Activated B cell treated with CpG ODN at 0.5 μM for 24 hours (primary cell): ENCODE measurements at regions of chr7 and their contacts with region 1.

Region 1: DNA sequence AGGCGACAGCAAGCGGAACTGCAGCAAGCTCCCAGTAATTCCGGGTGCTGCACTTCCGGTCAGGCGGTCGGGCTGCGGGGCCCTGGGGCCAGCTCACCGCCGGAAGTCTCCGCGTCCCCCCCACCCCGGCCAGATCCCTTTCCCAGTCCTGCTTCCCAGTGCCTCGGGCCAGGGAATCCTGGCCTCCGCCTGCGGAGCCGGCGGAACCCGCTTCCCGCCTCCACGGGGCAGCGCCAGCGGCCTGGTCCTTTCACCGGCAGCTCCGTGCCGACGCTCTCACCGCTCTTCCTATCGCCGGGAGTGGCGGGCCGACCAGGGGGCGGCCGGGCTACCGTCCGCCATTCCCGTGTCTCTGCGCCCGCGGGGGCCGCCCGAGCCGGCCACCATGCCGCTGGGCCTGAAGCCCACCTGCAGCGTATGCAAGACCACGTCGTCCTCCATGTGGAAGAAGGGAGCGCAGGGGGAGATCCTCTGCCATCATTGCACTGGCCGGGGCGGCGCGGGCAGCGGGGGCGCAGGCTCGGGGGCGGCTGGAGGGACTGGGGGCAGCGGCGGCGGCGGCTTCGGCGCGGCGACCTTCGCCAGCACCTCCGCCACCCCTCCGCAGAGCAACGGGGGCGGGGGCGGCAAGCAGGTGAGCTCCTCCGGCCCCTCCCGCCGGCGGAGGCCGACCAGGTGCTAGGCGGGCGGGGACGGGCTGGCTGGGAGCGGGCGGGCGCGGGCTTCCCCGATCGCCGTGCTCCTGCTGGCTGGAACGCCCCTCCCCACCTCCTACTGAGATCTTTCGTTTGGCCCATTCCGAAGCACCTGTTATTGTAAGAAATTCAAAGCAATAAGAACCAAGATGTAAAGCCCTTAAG is at the start of gene GATAD1:
- DNase-seq: peak; percentile 74
- ATAC-seq: peak; percentile 85
- H3K4me3 Mint-ChIP-seq: peak within 1 kb of the TSS; percentile 95
- H3K27ac Mint-ChIP-seq: peak within 1 kb of the TSS; percentile 97
- H3K4me1 Mint-ChIP-seq: peaks cover 8% of the 10 kb centered on the region
- H3K27me3 Mint-ChIP-seq: no peaks in the 10 kb centered on the region
- CTCF ChIP-seq: peak; percentile 61
- total RNA-seq, gene GATAD1: 30.6 and 36.2 TPM in 2 replicates

Region 2: DNA sequence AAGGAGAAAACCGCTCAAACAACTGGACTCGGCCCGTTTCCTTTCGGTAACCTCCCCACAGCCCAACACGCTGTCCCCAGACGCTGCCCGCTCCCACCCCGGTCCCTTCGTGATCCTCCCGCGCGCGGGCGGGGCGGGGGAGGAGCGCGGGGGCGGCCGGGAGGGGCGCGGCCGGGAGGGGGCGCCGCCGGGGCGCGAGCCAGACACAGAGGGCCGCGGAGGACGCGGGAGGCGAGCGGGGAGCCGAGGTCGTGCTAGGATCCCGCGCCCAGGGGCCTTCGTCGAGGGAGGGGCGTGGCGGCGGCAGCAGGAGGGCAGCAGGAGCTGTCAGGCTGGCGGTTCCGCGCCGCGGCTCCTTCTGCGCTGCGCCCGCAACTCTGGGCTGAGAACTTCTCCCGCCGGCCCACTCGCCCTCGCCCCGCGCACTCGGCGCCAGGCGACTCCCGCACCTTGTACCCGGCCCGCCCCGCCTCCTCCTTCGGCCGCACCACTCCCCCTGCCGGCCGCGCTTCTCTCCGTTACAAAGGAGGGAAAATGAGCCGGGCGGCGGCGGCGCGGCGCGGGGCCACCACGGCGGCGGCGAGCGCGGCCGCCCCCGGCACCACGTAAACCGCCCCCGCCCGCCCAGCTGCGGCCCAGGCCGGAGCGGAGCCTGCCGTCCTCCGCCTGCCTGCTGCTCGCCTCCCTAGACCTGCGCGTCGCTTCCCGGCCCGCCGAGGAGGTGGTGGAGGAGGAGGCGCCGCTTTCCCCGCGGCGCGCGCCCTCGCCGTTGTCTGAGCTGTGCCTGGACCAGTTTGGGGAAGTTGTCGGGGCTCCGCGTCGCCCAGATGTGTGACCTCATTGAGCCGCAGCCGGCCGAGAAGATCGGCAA is 1851.5 kb before region 1 on chr7 and contains the start of gene CDK14:
- CTCF ChIA-PET with region 1: no interaction called
- POLR2A ChIA-PET with region 1: no interaction called
- intact Hi-C with region 1: loop called (anchors 5 kb)
- DNase-seq: peak; percentile 79
- ATAC-seq: peak; percentile 66
- H3K4me3 Mint-ChIP-seq: peak within 1 kb of the TSS; percentile 96
- H3K27ac Mint-ChIP-seq: peak within 1 kb of the TSS; percentile 95
- H3K4me1 Mint-ChIP-seq: peaks cover 56% of the 10 kb centered on the region
- H3K27me3 Mint-ChIP-seq: no peaks in the 10 kb centered on the region
- CTCF ChIP-seq: no peak
- total RNA-seq, gene CDK14: 130 and 140 TPM in 2 replicates

Region 3: GRCh38 chr7:91288208-91288824 is 1159.3 kb before region 1 on chr7:
- CTCF ChIA-PET with region 1: interaction called, 3 read pairs
- POLR2A ChIA-PET with region 1: no interaction called
- intact Hi-C with region 1: loop called (anchors 5 kb)
- DNase-seq: no peak
- ATAC-seq: no peak
- H3K4me3 Mint-ChIP-seq: no peak overlapping the region
- H3K27ac Mint-ChIP-seq: no peak overlapping the region
- H3K4me1 Mint-ChIP-seq: no peaks in the 10 kb centered on the region
- H3K27me3 Mint-ChIP-seq: peaks cover 15% of the 10 kb centered on the region
- CTCF ChIP-seq: no peak

Region 4: GRCh38 chr7:91940572-91941341 is 506.8 kb before region 1 on chr7 and contains the start of gene AKAP9:
- CTCF ChIA-PET with region 1: interaction called, 4 read pairs
- POLR2A ChIA-PET with region 1: interaction called, 18 read pairs
- intact Hi-C with region 1: loop called (anchors 2 kb)
- DNase-seq: peak; percentile 85
- ATAC-seq: peak; percentile 91
- H3K4me3 Mint-ChIP-seq: peak within 1 kb of the TSS; percentile 94
- H3K27ac Mint-ChIP-seq: peak within 1 kb of the TSS; percentile 93
- H3K4me1 Mint-ChIP-seq: peaks cover 42% of the 10 kb centered on the region
- H3K27me3 Mint-ChIP-seq: no peaks in the 10 kb centered on the region
- CTCF ChIP-seq: no peak
- total RNA-seq, gene AKAP9: 54.4 and 58.4 TPM in 2 replicates

Region 5: DNA sequence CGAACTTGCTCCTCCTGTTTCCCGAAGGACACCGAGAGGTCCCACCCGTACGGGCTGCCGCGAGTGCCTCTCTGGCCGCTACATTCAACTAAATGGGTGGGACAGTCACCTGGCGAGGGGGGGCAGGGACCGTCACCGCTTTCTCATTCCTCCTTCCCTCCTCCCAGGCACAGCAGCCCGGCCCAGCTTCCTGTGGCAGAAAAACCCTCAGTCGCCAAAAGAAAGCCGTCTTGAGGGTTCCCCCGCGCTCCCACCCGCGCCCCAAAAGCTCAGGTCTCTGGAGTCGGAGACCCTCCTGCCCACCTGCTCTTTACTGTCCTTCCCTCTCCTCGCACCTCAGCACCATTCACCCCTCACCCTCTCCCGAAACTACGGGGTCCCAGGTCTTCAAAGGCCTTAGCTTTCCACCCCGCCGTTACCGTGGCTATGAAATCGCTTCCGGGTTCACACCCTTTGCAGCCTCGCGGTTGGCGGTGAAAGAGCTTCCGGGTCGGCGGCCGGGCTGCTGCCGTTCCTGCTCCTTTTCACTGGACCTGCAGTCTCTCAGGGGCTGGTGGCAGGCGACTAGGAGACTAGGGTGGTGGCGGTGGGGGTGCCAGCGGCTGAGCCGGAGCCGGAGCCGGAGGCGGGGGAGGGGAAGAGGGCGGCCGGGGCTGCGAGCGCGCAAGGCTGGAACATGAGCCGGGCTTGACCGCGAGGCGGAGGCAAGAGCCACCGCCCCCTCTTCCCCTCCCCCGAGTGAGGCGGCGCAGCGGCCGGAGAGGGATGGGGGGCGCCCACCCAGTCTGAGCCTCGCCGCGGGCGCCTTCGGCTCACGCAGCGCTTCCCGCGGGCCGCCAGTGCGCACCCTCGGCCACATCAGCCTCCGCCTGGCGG is 201.8 kb before region 1 on chr7 and contains the starts of genes ANKIB1 and KRIT1:
- CTCF ChIA-PET with region 1: interaction called, 12 read pairs
- POLR2A ChIA-PET with region 1: interaction called, 36 read pairs
- intact Hi-C with region 1: loop called (anchors 1 kb)
- DNase-seq: peak; percentile 79
- ATAC-seq: peak; percentile 84
- H3K4me3 Mint-ChIP-seq: peak within 1 kb of the TSS; percentile 100
- H3K27ac Mint-ChIP-seq: peak within 1 kb of the TSS; percentile 99
- H3K4me1 Mint-ChIP-seq: peaks cover 40% of the 10 kb centered on the region
- H3K27me3 Mint-ChIP-seq: no peaks in the 10 kb centered on the region
- CTCF ChIP-seq: no peak
- total RNA-seq, gene ANKIB1: 42.5 and 50.6 TPM in 2 replicates
- total RNA-seq, gene KRIT1: 53.4 and 61.1 TPM in 2 replicates

Region 6: DNA sequence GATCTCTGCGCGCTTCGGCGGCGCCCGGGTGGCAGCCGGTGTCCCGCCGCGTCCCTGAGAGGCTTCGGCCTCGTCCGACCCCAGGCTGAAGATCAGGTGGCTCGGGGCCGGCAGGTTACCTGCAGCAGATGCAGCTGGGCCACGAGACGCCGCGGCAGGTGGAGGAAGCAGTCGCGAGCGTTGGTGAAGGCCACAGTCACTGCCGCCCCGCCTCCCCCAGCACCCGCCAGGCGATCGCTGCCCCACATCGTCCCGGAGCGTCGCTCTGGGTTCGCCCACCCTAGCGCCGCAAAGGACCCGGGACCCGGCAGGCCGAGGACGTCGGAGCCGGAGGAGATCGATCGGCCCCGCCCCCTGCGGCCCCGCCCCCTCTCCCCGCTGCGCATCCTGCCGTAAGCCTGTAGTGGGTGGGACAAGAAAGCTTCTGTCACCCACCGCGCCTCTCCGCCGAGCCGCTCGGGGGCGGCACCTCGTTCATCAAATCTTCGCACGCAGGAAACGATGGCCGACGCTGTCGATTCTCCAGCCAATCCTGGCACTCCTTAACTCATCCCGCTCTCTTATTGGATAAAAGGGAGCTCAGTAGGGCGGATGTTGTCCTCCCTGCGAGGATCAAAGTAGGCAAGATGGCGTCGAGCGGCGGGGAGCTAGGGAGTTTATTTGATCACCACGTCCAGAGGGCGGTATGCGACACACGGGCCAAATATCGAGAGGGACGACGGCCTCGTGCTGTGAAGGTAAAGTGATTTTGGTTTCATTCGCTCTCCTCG is 80.8 kb after region 1 on chr7 and contains the starts of genes PEX1 and RBM48:
- CTCF ChIA-PET with region 1: interaction called, 21 read pairs
- POLR2A ChIA-PET with region 1: interaction called, 41 read pairs
- intact Hi-C with region 1: loop called (anchors 1 kb)
- DNase-seq: peak; percentile 80
- ATAC-seq: peak; percentile 92
- H3K4me3 Mint-ChIP-seq: peak within 1 kb of the TSS; percentile 89
- H3K27ac Mint-ChIP-seq: peak within 1 kb of the TSS; percentile 93
- H3K4me1 Mint-ChIP-seq: peaks cover 24% of the 10 kb centered on the region
- H3K27me3 Mint-ChIP-seq: no peaks in the 10 kb centered on the region
- CTCF ChIP-seq: no peak
- total RNA-seq, gene PEX1: 18.2 and 21.8 TPM in 2 replicates
- total RNA-seq, gene RBM48: 21.6 and 24.3 TPM in 2 replicates

Region 7: DNA sequence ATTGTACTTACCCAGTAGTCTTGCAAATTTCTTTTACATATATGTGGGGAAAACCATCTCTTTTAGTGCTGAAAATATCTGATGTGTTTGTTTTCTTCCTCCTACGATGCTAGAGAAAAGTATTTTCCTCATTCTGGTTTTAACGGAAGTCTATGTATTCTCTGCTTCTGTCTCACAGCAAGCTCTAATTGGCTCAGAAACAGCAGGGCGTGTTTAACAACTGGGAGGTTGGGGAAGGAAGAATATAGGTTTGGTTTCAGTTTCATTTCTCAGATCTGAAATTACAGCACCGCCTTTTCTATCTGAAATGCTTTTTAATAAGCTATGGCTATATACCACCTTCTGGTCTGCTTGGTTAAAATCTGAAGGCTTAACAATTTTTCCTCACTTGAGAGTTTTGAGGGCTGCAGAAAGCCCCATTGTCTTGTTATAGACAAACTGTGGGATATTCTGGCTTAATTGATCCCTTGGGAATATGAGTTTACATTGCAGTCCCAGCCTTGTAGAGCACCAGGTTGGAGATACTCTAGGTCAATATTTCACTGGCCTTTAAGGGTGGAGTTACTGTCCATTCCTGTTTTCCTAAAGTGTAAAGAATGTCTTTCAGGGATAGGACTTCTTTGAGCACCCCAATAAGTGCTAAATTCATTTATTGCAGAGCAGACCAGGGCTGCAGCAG is 670.4 kb after region 1 on chr7 and contains the start of gene SAMD9:
- CTCF ChIA-PET with region 1: no interaction called
- POLR2A ChIA-PET with region 1: no interaction called
- intact Hi-C with region 1: loop called (anchors 2 kb)
- DNase-seq: no peak
- ATAC-seq: peak; percentile 99
- H3K4me3 Mint-ChIP-seq: peak within 1 kb of the TSS; percentile 79
- H3K27ac Mint-ChIP-seq: peak within 1 kb of the TSS; percentile 74
- H3K4me1 Mint-ChIP-seq: peaks cover 46% of the 10 kb centered on the region
- H3K27me3 Mint-ChIP-seq: no peaks in the 10 kb centered on the region
- CTCF ChIP-seq: no peak
- total RNA-seq, gene SAMD9: 24.4 and 26.3 TPM in 2 replicates